ENCODE measurements at regions of chr4 and their contacts with region 1.

Region 1: DNA sequence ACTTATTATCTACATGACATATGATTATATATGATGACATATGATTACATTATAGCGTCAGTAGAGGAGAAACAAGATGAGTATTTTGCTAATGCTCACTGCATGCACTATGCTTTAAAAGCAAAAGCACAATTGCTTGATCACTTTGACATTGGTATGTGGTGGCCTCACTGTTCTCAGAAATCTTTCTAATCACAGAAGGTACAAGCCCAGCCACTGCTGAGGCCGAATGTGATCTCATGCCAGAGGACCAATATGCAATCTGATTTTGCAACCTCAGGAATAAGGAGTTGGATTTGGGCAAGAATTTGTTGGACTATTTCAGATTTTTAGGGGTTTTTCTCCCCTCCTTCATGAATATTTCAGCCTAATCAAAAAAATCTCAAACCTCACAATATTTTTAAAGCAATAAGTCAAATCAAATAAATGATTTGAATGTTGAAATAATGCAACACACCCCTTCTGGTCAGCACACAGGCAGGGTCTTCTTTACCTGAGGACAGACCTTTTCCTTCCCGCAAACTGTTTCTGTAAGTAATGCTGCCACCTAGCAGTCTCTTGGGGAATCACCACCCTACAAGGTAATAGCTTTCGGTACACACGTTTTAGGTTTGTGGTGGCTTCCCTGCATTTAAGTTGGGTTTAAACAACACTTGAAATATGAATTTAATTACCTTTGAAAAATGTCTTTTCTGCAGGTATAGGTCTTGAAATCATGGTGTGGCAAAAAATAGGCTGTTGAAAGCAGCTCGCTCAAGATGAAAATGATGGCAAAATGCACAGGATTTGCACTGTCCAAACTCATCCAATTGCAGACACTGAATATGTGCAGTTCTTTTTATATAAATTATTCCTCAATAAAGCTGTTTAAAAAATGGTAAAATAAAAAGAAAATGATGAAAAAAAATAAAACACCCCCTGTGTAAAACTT is 4.8 kb upstream of the CXCL13 start:
- DNase-seq: peak; percentile 42
- CTCF ChIP-seq: peak; percentile 69

Region 2: DNA sequence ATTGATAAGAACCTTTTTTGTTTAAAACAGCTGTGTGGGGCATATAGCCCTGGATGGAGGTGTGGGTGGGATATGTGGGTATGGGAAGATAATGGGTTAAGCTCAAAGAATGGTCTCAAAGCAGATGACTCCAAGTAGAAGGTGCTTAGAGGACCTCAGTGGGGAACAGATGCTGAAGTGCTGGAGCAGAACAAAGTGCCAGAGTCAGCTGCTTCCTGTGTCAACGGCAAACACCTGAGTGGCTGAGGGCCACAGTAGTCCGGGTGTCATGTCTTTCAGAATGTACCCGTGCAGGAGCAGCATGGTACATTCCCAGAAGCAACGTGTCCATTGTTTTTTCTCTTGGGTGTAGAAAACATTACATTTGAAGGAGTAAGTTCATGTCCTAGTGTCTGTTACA is 233.1 kb before region 1 on chr4:
- CTCF ChIA-PET with region 1: interaction called, 10 read pairs
- POLR2A ChIA-PET with region 1: no interaction called
- DNase-seq: no peak
- CTCF ChIP-seq: no peak

Region 3: GRCh38 chr4:77385124-77385969 is 215.4 kb before region 1 on chr4:
- CTCF ChIA-PET with region 1: interaction called, 72 read pairs
- POLR2A ChIA-PET with region 1: no interaction called
- DNase-seq: peak; percentile 48
- CTCF ChIP-seq: peak; percentile 80

Region 4: GRCh38 chr4:77393996-77394395 is 206.8 kb before region 1 on chr4:
- CTCF ChIA-PET with region 1: interaction called, 72 read pairs
- POLR2A ChIA-PET with region 1: no interaction called
- DNase-seq: no peak
- CTCF ChIP-seq: no peak

Region 5: GRCh38 chr4:77465271-77465670 is 135.5 kb before region 1 on chr4:
- CTCF ChIA-PET with region 1: interaction called, 34 read pairs
- POLR2A ChIA-PET with region 1: no interaction called
- DNase-seq: peak; percentile 19
- CTCF ChIP-seq: peak; percentile 39

Region 6: DNA sequence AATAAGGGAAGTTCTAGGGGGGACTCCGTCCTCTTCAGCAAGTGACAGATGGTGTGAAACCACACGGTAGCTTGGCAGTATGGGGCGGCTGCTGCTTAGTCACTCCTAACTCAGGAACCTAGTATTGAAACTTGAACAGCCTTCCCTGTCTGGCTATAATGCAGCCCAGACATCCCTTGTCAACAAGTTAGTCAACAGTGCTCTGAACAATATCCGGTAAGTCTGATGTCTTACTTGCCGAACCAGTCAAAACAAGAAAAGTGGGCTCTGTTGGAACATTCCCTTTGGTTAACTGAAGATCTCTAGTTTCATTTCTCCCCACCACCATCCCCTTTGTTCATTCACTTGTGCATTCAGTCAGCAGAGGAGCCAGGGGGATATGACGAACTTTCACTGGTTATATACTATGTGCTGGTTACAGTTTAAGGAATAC is 13.8 kb before region 1 on chr4:
- CTCF ChIA-PET with region 1: interaction called, 20 read pairs
- POLR2A ChIA-PET with region 1: no interaction called
- DNase-seq: peak; percentile 57
- CTCF ChIP-seq: no peak

Region 7: DNA sequence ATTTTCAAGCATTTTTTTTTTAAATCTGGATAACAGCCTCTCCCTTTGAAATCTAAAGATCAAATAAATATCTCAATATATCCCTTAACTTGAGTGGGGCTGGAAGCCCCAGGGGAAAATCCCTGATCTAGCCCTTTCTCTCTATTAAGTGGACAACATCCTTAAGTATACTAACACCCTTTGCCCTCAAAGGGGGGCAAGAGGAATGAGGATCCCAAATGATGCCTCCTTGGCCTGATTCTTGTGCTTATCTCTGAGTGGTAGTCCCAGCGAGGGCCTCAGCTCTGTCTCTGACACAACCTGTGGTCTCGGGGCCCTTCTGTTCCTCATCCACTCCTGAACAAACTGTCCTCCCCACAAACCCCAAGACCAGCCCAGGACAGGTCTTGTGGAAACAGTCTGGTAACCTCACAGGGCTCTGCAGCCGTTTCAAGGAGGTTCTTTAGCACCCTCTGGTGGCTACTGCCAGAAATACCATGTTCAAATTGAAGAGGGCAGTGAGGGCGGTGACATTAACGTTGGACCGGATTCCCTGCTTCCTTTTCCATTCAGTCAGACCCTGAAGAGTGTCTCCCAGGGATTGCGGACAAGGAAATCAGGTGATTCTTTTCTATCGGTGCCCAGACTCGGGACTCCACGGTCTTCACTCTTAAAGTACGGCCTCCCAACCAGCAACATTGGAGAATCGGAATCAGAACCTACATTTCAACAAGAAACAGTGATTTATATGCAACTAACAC is 17.8 kb after region 1 on chr4:
- CTCF ChIA-PET with region 1: interaction called, 96 read pairs
- POLR2A ChIA-PET with region 1: no interaction called
- DNase-seq: peak; percentile 70
- CTCF ChIP-seq: peak; percentile 89